ENCODE measurements at regions of chr6 and their contacts with region 1.

Region 1: DNA sequence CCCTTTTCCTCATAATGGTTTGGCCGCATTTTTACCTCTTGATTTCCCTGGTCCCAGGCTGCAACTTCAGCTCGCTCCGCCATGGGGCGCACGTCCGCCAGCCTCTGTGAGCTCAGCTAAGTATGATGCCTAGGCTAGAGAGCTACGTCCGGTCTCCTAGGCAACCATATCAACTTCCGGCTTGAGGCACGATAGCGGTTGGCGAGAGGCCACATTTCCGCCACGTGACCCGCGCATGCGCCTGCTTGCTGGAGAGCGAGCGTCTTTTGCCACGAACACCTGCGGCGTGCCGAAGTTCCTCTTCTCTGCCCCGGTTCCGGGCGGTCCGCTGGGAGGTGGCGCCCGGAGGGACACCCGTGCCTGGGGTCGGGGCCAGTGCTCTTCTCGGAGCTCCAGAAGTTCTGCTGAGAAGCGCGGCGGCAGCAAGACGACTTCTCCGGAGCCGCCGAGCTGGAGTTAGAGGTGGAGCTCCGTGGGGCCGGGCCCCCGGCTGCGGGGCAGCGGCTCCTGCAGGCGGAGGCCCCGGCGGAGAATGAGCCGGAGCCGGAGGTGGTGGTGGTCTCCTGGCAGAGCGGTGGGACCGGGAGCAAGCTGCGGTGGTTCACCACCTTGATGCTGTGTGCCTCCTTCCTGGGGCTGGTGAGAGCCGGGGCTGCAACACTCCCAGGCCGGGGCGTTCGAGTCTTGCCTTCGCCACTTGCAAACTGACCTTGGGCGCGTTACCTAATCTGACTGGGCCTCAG is 172.0 kb downstream of the SLC16A10 start:
- DNase-seq: peak; percentile 99
- H3K4me3 ChIP-seq: peak overlapping the region; percentile 42 to 71
- H3K4me3 Mint-ChIP-seq: peak overlapping the region; percentile 84 to 90 (median 87)
- H3K27ac ChIP-seq: peak overlapping the region; percentile 84
- H3K27ac Mint-ChIP-seq: peak overlapping the region; percentile 87 to 98 (median 96)
- H3K4me1 ChIP-seq: peaks cover 35% of the 10 kb centered on the region
- H3K4me1 Mint-ChIP-seq: peaks cover 16 to 34% (median 23%) of the 10 kb centered on the region in 4 donors
- H3K27me3 ChIP-seq: no peaks in the 10 kb centered on the region
- H3K27me3 Mint-ChIP-seq: peaks cover 3 to 4% of the 10 kb centered on the region in 2 donors

Region 2: DNA sequence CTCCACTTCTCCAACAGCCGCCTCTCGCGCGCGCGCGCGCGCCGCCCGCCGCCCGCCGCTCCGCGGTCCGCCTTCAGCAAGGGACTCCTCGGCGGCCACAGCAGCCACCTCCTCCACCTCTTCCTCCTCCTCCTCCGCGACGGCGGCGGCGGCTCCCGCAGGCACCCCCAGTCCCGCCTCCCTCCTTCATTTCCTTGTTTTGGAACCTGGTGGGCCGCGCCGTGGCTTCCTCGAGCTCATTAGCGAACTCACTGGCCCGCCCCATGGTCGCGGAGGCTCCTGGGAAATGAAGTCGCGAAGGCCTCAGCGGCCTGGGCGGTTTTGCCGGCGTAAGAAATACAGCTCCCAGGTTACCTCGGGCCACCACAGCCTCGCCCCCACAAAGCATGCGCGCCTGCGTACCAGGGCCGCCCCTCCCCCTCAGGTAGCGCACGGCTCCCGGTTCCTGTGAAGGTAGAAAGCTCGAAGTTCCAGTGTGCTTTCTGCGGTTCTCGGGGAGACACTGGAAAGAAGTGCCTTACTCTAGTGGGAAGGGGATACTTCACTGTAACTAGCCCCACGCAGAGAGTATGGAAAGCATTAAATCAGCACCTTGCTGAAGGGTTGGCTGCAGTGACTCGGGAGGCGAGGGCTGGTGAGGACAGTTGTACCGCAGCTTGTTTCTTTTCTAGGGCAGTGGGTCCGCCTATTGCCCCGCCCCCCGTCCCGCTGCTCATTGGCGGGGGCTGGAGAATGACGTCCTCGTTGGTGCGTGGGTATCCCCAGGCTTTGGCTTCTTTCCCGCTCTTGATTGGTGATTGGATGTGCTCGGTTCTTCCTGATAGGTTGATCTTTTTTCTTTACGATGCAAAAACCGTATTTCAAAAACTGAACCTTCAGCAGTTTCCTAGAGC is 443.8 kb before region 1 on chr6 and contains the start of gene CDK19:
- CTCF ChIA-PET with region 1: no interaction called
- POLR2A ChIA-PET with region 1: interaction called, 3 read pairs
- intact Hi-C with region 1: loop called (anchors 1 kb)
- DNase-seq: peak; percentile 99
- H3K4me3 ChIP-seq: peak within 1 kb of the TSS; percentile 85 to 91
- H3K4me3 Mint-ChIP-seq: peak within 1 kb of the TSS; percentile 95 to 100 (median 98)
- H3K27ac ChIP-seq: peak within 1 kb of the TSS; percentile 75
- H3K27ac Mint-ChIP-seq: peak within 1 kb of the TSS; percentile 98 to 100 (median 99)
- H3K4me1 ChIP-seq: peaks cover 26% of the 10 kb centered on the region
- H3K4me1 Mint-ChIP-seq: peaks cover 14 to 38% (median 20%) of the 10 kb centered on the region in 4 donors
- H3K27me3 ChIP-seq: no peaks in the 10 kb centered on the region
- H3K27me3 Mint-ChIP-seq: no peaks in the 10 kb centered on the region
- total RNA-seq, gene CDK19: 23.8 to 24.3 TPM

Region 3: DNA sequence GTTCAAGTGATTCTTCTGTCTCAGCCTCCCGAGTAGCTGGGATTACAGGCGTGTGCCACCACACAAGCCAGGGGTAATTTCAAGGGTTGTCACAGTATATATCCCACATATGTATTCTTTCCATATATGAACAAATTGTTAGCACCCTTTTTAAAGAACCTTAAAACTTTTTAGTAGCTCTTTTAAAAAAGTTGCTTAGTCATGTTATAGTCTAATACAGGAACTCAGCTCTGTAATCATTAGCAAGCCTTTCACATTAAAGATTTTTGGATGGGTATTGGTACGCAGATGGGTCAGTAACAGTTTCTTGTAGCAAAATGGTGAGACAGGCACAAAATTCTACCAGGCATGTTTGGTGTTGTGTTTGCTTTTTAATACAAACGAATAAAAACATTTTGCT is 373.7 kb before region 1 on chr6:
- CTCF ChIA-PET with region 1: no interaction called
- POLR2A ChIA-PET with region 1: no interaction called
- intact Hi-C with region 1: no loop called
- DNase-seq: no peak
- H3K4me3 ChIP-seq: no peak overlapping the region
- H3K4me3 Mint-ChIP-seq: peak overlapping the region in 5 of 8 donors; percentile 20 to 60 (median 50)
- H3K27ac ChIP-seq: no peak overlapping the region
- H3K27ac Mint-ChIP-seq: peak overlapping the region in 5 of 7 donors; percentile 22 to 74 (median 51)
- H3K4me1 ChIP-seq: peaks cover 77% of the 10 kb centered on the region
- H3K4me1 Mint-ChIP-seq: peaks cover 48 to 83% (median 66%) of the 10 kb centered on the region in 4 donors
- H3K27me3 ChIP-seq: no peaks in the 10 kb centered on the region
- H3K27me3 Mint-ChIP-seq: no peaks in the 10 kb centered on the region

Region 4: DNA sequence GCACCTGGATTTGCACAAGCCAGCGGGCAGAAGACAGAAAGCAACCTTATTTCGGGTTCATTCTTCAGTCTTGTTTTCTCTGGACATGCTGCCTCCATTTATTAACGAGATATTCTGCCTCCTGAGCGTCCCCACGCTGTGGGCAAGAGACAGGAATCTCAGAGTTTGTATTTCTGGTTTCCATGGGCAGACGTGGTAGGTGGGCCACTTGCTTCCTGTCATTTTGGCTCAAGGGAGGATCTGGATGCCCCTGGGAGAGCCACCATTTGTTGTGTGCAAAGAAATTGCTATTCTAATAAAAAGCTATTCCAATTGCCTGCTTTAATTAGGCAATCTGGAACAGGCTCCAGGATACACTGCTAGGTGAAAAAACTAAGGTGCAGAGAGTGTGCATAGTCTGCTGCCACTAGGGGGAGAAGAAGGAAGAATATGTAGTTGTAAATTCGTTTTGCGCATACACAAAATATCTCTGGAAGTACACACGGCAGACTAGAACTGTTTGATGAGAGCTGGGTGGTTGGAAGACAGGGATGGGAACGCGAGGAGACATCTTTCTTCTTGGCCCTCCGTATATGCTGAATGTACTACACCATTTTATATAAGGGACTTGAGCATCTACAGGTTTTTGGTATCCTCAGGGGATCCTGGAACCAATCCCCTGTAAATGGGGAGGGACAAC is 202.0 kb before region 1 on chr6:
- CTCF ChIA-PET with region 1: interaction called, 9 read pairs
- POLR2A ChIA-PET with region 1: no interaction called
- intact Hi-C with region 1: loop called (anchors 1 kb)
- DNase-seq: peak in 4 of 5 donors; percentile 23 to 30 (median 27)
- H3K4me3 ChIP-seq: no peak overlapping the region
- H3K4me3 Mint-ChIP-seq: no peak overlapping the region
- H3K27ac ChIP-seq: no peak overlapping the region
- H3K27ac Mint-ChIP-seq: no peak overlapping the region
- H3K4me1 ChIP-seq: no peaks in the 10 kb centered on the region
- H3K4me1 Mint-ChIP-seq: peaks cover 0 to 5% (median 2%) of the 10 kb centered on the region in 4 donors
- H3K27me3 ChIP-seq: no peaks in the 10 kb centered on the region
- H3K27me3 Mint-ChIP-seq: no peaks in the 10 kb centered on the region

Region 5: GRCh38 chr6:111478749-111479148 is 219.5 kb after region 1 on chr6:
- CTCF ChIA-PET with region 1: interaction called, 128 read pairs
- POLR2A ChIA-PET with region 1: interaction called, 57 read pairs
- intact Hi-C with region 1: loop called (anchors 1 kb)
- DNase-seq: peak; percentile 31 to 54 (median 47)
- H3K4me3 ChIP-seq: no peak overlapping the region
- H3K4me3 Mint-ChIP-seq: peak overlapping the region in 1 of 8 donors; percentile 21
- H3K27ac ChIP-seq: no peak overlapping the region
- H3K27ac Mint-ChIP-seq: peak overlapping the region in 6 of 7 donors; percentile 36 to 86 (median 63)
- H3K4me1 ChIP-seq: peaks cover 29% of the 10 kb centered on the region
- H3K4me1 Mint-ChIP-seq: peaks cover 29 to 41% (median 34%) of the 10 kb centered on the region in 4 donors
- H3K27me3 ChIP-seq: no peaks in the 10 kb centered on the region
- H3K27me3 Mint-ChIP-seq: no peaks in the 10 kb centered on the region

Region 6: GRCh38 chr6:111642463-111643158 is 383.4 kb after region 1 on chr6:
- CTCF ChIA-PET with region 1: interaction called, 8 read pairs
- POLR2A ChIA-PET with region 1: interaction called, 7 read pairs
- intact Hi-C with region 1: loop called (anchors 1 kb)
- DNase-seq: no peak
- H3K4me3 ChIP-seq: no peak overlapping the region
- H3K4me3 Mint-ChIP-seq: no peak overlapping the region
- H3K27ac ChIP-seq: no peak overlapping the region
- H3K27ac Mint-ChIP-seq: no peak overlapping the region
- H3K4me1 ChIP-seq: no peaks in the 10 kb centered on the region
- H3K4me1 Mint-ChIP-seq: no peaks in the 10 kb centered on the region
- H3K27me3 ChIP-seq: no peaks in the 10 kb centered on the region
- H3K27me3 Mint-ChIP-seq: no peaks in the 10 kb centered on the region

Region 7: GRCh38 chr6:112087136-112087911 is 828.1 kb after region 1 on chr6 and contains the starts of genes FAM229B and TUBE1:
- CTCF ChIA-PET with region 1: interaction called, 6 read pairs
- POLR2A ChIA-PET with region 1: interaction called, 11 read pairs
- intact Hi-C with region 1: loop called (anchors 2 kb)
- DNase-seq: peak; percentile 89 to 97 (median 93)
- H3K4me3 ChIP-seq: peak within 1 kb of the TSS; percentile 31 to 80
- H3K4me3 Mint-ChIP-seq: no peak within 1 kb of the TSS
- H3K27ac ChIP-seq: peak within 1 kb of the TSS; percentile 78
- H3K27ac Mint-ChIP-seq: peak within 1 kb of the TSS in 1 of 7 donors; percentile 59
- H3K4me1 ChIP-seq: peaks cover 15% of the 10 kb centered on the region
- H3K4me1 Mint-ChIP-seq: peaks cover 6 to 15% (median 8%) of the 10 kb centered on the region in 4 donors
- H3K27me3 ChIP-seq: peaks cover 15% of the 10 kb centered on the region
- H3K27me3 Mint-ChIP-seq: peaks cover 13 to 17% of the 10 kb centered on the region in 2 donors
- total RNA-seq, gene FAM229B: 1.7 to 1.9 TPM
- total RNA-seq, gene TUBE1: 40.6 to 45.2 TPM

Measured in CD4-positive, alpha-beta memory T cell (primary cell).